Heart left ventricle (tissue), 16 donors: ENCODE measurements at regions of chr5 and their contacts with region 1.

Region 1: GRCh38 chr5:147857302-147858129 is 21.0 kb upstream of the SCGB3A2 start:
- DNase-seq: peak in 4 of 5 donors; percentile 32 to 40 (median 32)
- ATAC-seq: peak in 2 of 4 donors; percentile 53 to 54
- H3K4me3 ChIP-seq: no peak overlapping the region
- H3K27ac ChIP-seq: no peak overlapping the region
- H3K4me1 ChIP-seq: peaks cover 0 to 3% (median 0%) of the 10 kb centered on the region in 12 donors
- H3K27me3 ChIP-seq: no peaks in the 10 kb centered on the region
- CTCF ChIP-seq: peak; percentile 69 to 86 (median 78)
- POLR2A ChIP-seq: no peak

Region 2: GRCh38 chr5:147887024-147887627 is 29.6 kb after region 1 on chr5:
- intact Hi-C with region 1: loop called in 1 of 10 experiments (anchors 2 kb)
- DNase-seq: no peak
- ATAC-seq: no peak
- H3K4me3 ChIP-seq: no peak overlapping the region
- H3K27ac ChIP-seq: no peak overlapping the region
- H3K4me1 ChIP-seq: peaks cover 0 to 15% (median 0%) of the 10 kb centered on the region in 12 donors
- H3K27me3 ChIP-seq: no peaks in the 10 kb centered on the region
- CTCF ChIP-seq: peak; percentile 22 to 65 (median 50)
- POLR2A ChIP-seq: no peak

Region 3: GRCh38 chr5:147935032-147935431 is 77.5 kb after region 1 on chr5:
- intact Hi-C with region 1: loop called (anchors 2 to 5 kb)
- DNase-seq: no peak
- ATAC-seq: peak; percentile 10 to 80 (median 77)
- H3K4me3 ChIP-seq: no peak overlapping the region
- H3K27ac ChIP-seq: no peak overlapping the region
- H3K4me1 ChIP-seq: no peaks in the 10 kb centered on the region
- H3K27me3 ChIP-seq: peaks cover 0 to 4% (median 0%) of the 10 kb centered on the region in 9 donors
- CTCF ChIP-seq: peak in 11 of 12 donors; percentile 34 to 65 (median 52)
- POLR2A ChIP-seq: no peak

Region 4: DNA sequence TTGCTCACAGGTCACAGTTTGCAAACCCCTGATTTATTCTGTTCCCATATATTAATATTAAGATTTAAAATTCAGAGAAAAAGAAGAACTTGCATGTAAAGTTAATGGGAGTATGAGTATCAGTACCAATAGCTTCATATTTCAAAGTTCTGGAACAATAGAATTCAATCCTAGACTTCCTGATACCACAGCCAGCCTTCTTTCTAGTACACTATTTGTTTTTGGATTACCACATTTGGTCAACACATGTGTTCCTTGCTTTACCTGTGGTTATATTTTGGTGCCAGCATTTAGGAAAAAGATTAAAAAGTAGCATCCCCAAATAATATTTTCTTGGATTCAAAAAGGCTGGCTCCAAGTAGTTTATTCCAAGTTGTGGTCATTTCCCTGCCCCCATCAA is 255.7 kb after region 1 on chr5:
- intact Hi-C with region 1: loop called in 2 of 10 experiments (anchors 10 kb)
- DNase-seq: no peak
- ATAC-seq: no peak
- H3K4me3 ChIP-seq: no peak overlapping the region
- H3K27ac ChIP-seq: no peak overlapping the region
- H3K4me1 ChIP-seq: peaks cover 0 to 4% (median 0%) of the 10 kb centered on the region in 12 donors
- H3K27me3 ChIP-seq: no peaks in the 10 kb centered on the region
- CTCF ChIP-seq: no peak
- POLR2A ChIP-seq: no peak